IMR-90 (cell line): ENCODE measurements at regions of chr20 and their contacts with region 1.

Region 1: GRCh38 chr20:36808317-36809257 is 35.0 kb upstream of the DSN1 start:
- DNase-seq: peak; percentile 89
- ATAC-seq: peak; percentile 82
- H3K4me3 ChIP-seq: no peak overlapping the region
- H3K27ac ChIP-seq: peak overlapping the region; percentile 22; the same call in 1 of the 2 replicates
- H3K4me1 ChIP-seq: peaks cover 7% of the 10 kb centered on the region
- H3K27me3 ChIP-seq: no peaks in the 10 kb centered on the region
- CTCF ChIP-seq: peak; percentile 59
- POLR2A ChIP-seq: no peak
- RAD21 ChIP-seq: peak; percentile 46

Region 2: DNA sequence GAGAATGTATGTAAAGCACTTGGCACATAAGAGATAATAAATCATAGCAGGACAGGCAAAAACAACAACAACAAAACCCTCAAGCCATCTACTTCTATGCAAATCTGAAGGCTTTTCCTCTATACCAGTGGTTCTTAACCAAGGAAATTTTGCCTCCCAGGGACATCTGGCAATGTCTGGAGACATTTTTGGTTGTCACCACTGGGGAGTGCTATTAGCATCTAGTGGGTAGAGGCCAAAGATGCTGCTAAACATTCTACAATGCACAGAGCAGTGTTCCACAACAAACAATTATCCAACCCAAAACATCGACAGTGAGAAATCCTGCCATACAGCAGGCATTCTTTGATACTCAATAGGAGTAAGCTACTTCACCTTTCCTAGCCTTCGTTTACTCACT is 90.9 kb before region 1 on chr20:
- CTCF ChIA-PET with region 1: no interaction called
- POLR2A ChIA-PET with region 1: no interaction called
- dilution Hi-C with region 1: no loop called
- in situ Hi-C with region 1: loop called (anchors 25 kb)
- intact Hi-C with region 1: no loop called
- DNase-seq: no peak
- ATAC-seq: no peak
- H3K4me3 ChIP-seq: no peak overlapping the region
- H3K27ac ChIP-seq: no peak overlapping the region
- H3K4me1 ChIP-seq: no peaks in the 10 kb centered on the region
- H3K27me3 ChIP-seq: no peaks in the 10 kb centered on the region
- CTCF ChIP-seq: 0 out of 2 replicates have a peak, but pooled peaks have one; percentile 10
- POLR2A ChIP-seq: no peak
- RAD21 ChIP-seq: no peak